ENCODE measurements at regions of chr3 and their contacts with region 1.

Region 1: GRCh38 chr3:31092748-31093551 is 198.5 kb upstream of the GADL1 start:
- DNase-seq: peak; percentile 59
- H3K4me3 ChIP-seq: no peak overlapping the region
- H3K27ac ChIP-seq: peak overlapping the region; percentile 53
- H3K4me1 ChIP-seq: peaks cover 13% of the 10 kb centered on the region
- H3K27me3 ChIP-seq: no peaks in the 10 kb centered on the region
- CTCF ChIP-seq: no peak
- POLR2A ChIP-seq: no peak

Region 2: DNA sequence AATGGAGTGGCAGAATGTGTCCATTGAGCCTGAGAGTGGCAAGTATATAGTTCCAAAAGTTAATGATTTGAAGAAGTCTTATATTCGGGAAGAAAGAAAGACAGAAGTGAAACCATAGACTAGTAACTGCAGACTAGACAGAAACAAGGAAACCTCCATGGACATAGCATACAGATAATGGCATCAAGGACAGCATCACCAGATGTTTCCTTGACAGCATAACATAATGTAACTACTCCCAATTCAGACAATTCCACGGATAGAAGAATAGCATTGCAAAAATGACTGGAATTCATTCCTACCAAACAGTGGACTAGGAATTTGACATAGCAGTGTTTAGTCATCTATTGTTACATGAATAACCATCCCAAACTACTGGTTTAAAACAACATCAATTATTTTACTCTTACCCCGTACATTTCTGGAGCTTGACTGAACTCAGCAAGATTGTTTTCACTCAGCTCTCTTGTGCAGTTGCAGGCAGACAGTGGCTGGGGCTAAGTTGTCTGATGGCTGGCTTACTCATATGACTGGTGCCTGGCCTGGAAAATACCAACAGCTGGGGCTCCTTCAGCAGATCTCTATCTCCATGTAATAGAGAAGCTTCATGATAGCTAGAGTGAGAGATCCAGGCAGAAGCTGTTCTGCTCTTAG is 88.8 kb before region 1 on chr3:
- CTCF ChIA-PET with region 1: no interaction called
- POLR2A ChIA-PET with region 1: no interaction called
- dilution Hi-C with region 1: no loop called
- intact Hi-C with region 1: loop called (anchors 1 kb)
- DNase-seq: peak; percentile 72
- H3K4me3 ChIP-seq: no peak overlapping the region
- H3K27ac ChIP-seq: peak overlapping the region; percentile 85
- H3K4me1 ChIP-seq: peaks cover 15% of the 10 kb centered on the region
- H3K27me3 ChIP-seq: no peaks in the 10 kb centered on the region
- CTCF ChIP-seq: no peak
- POLR2A ChIP-seq: no peak

Region 3: GRCh38 chr3:31010491-31010890 is 82.5 kb before region 1 on chr3:
- CTCF ChIA-PET with region 1: interaction called, 3 read pairs
- POLR2A ChIA-PET with region 1: no interaction called
- dilution Hi-C with region 1: no loop called
- intact Hi-C with region 1: loop called (anchors 1 kb)
- DNase-seq: peak; percentile 77
- H3K4me3 ChIP-seq: no peak overlapping the region
- H3K27ac ChIP-seq: peak overlapping the region; percentile 70
- H3K4me1 ChIP-seq: peaks cover 42% of the 10 kb centered on the region
- H3K27me3 ChIP-seq: no peaks in the 10 kb centered on the region
- CTCF ChIP-seq: no peak
- POLR2A ChIP-seq: no peak

Region 4: DNA sequence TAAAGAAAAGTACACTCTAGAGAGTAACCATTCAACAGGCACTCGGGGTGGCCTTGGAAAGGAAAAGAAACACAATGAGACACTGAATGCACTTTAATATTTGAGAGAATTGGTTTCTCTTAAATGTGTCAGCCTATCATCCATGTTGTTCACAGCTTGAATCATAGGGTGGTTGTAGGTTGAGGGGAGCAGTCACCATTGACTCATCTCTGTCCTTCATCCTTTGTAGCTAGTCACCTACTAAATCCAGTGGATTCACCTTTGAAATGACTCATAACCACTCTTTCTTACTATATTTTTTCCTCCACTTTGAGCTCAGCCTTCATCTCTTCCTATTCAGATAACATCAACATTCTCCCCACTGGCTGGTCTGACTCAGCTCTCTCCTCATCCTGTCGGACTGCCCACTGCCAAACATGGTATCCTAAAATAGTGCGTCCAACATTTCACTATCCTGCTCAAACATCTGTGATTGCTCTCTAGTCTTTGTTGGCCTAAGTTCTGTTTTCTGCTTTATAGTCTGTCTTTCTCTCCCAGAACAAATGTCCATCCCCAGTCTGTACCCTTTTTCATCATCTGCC is 15.8 kb before region 1 on chr3:
- CTCF ChIA-PET with region 1: interaction called, 9 read pairs
- POLR2A ChIA-PET with region 1: no interaction called
- dilution Hi-C with region 1: no loop called
- intact Hi-C with region 1: loop called (anchors 1 kb)
- DNase-seq: peak; percentile 89
- H3K4me3 ChIP-seq: no peak overlapping the region
- H3K27ac ChIP-seq: peak overlapping the region; percentile 66
- H3K4me1 ChIP-seq: peaks cover 21% of the 10 kb centered on the region
- H3K27me3 ChIP-seq: no peaks in the 10 kb centered on the region
- CTCF ChIP-seq: no peak
- POLR2A ChIP-seq: no peak

Region 5: GRCh38 chr3:31105438-31106077 is 12.6 kb after region 1 on chr3:
- CTCF ChIA-PET with region 1: interaction called, 3 read pairs
- POLR2A ChIA-PET with region 1: no interaction called
- dilution Hi-C with region 1: no loop called
- intact Hi-C with region 1: loop called (anchors 1 kb)
- DNase-seq: peak; percentile 76
- H3K4me3 ChIP-seq: no peak overlapping the region
- H3K27ac ChIP-seq: peak overlapping the region; percentile 55
- H3K4me1 ChIP-seq: peaks cover 19% of the 10 kb centered on the region
- H3K27me3 ChIP-seq: no peaks in the 10 kb centered on the region
- CTCF ChIP-seq: no peak
- POLR2A ChIP-seq: no peak

Region 6: DNA sequence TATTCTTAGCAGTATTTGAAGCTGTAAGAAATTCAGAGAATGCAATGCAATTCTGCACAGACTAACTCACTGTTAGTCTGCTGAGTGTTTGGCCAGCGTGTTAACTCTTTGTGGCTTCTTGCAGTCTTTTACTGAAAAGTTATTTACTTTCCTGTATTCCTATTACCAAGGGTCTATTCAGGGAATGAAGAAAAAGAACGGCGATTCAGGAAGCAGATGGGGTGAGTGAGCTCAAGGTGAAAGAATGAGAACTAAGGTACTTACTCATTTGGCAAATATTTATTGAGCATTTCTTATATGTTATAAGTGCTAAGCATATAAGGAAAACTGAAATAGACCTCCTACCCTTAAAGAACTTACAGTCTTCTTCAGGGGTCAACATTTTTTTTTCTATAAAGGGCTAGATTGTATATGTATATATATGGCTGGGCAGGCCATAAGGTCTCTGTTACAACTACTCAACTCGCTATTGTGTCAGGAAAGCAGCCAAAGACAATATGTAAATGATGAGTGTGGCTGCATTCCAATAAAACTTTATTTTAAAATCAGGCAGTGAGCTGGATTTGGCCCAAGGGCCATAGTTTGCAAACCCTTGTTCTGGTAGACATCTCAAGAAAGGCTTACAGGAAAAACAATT is 73.4 kb after region 1 on chr3:
- CTCF ChIA-PET with region 1: no interaction called
- POLR2A ChIA-PET with region 1: no interaction called
- dilution Hi-C with region 1: no loop called
- intact Hi-C with region 1: loop called (anchors 1 kb)
- DNase-seq: peak; percentile 91
- H3K4me3 ChIP-seq: peak overlapping the region in 1 of 3 experiments; percentile 19
- H3K27ac ChIP-seq: peak overlapping the region; percentile 87
- H3K4me1 ChIP-seq: peaks cover 32% of the 10 kb centered on the region
- H3K27me3 ChIP-seq: no peaks in the 10 kb centered on the region
- CTCF ChIP-seq: no peak
- POLR2A ChIP-seq: peak; percentile 17

Region 7: GRCh38 chr3:31275038-31275562 is 182.2 kb after region 1 on chr3:
- CTCF ChIA-PET with region 1: no interaction called
- POLR2A ChIA-PET with region 1: no interaction called
- dilution Hi-C with region 1: no loop called
- intact Hi-C with region 1: loop called (anchors 1 kb)
- DNase-seq: peak; percentile 56
- H3K4me3 ChIP-seq: no peak overlapping the region
- H3K27ac ChIP-seq: peak overlapping the region; percentile 42
- H3K4me1 ChIP-seq: peaks cover 38% of the 10 kb centered on the region
- H3K27me3 ChIP-seq: no peaks in the 10 kb centered on the region
- CTCF ChIP-seq: no peak
- POLR2A ChIP-seq: no peak